Activated CD4-positive, alpha-beta T cell treated with anti-CD3 and anti-CD28 coated beads for 36 hours (primary cell): ENCODE measurements at regions of chr10 and their contacts with region 1.

Region 1: DNA sequence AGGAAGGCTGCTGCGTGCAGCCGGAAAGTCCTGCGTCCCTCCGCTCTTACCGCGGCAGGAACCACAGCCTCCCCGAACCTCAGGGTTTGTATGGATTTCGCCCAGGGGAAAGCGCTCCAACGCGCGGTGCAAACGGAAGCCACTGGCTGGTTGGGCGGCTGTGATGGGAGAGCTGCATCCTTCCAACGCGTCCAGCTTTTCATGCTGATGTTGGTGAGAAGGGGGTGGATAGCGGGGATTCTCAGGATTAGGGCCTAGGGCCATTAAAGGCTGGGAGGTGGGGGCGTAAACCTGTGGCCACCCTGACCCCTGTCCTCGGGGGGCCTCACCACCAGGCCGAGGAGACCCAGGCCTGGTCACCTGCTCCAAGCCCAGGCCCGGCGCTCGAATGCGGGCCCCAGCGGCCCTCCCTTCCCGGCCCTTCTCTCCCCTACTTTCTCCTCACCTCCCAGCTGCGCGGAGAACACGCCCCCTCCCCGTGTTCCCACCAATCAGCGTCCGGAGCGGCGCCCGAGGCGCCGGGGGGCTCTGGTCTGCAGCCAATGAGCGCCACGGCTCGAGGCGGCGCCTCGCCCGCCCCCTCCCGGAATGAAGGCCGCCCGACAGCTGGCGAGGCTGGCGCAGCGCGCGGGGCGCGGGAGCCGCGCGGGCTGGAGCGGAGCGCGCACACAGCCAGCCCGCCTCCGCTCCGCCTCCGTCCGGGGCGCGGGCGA is 458 bp upstream of the NANOS1 start:
- DNase-seq: peak; percentile 85
- ATAC-seq: peak; percentile 74
- H3K4me3 Mint-ChIP-seq: peak overlapping the region; percentile 47
- H3K27ac Mint-ChIP-seq: no peak overlapping the region
- H3K4me1 Mint-ChIP-seq: peaks cover 16% of the 10 kb centered on the region
- H3K27me3 Mint-ChIP-seq: no peaks in the 10 kb centered on the region

Region 2: DNA sequence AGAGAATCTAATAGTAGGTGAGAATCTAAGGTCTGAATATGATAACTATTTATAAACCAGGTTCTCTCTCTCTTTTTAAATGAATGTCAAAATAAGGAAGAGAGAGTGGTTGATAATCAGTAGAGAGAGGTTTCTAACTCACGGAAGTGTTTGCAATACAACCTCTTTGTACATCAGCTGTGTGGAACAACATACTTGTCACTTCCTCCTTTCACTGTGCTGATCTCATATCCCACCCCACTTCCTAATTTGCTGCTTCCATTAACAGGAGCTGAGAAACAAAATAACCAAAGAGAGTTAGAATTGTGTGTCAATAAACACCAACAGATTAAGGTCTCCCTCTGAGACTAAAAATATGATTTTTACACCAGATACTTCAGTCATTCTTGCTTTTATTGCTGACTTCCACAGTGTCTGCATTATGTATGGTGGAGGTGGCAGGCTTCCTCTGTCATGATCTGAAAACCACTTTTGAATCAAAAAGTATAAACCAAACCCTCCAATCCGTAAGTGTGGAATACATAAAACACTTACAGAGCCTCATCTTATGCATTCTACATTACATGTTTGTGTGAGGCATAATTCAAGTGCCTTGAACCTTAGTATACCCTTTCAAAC is 299.3 kb before region 1 on chr10:
- CTCF ChIA-PET with region 1: no interaction called
- POLR2A ChIA-PET with region 1: no interaction called
- intact Hi-C with region 1: loop called in 1 of 2 experiments (anchors 10 kb)
- DNase-seq: no peak
- ATAC-seq: peak; percentile 31
- H3K4me3 Mint-ChIP-seq: no peak overlapping the region
- H3K27ac Mint-ChIP-seq: no peak overlapping the region
- H3K4me1 Mint-ChIP-seq: peaks cover 57% of the 10 kb centered on the region
- H3K27me3 Mint-ChIP-seq: peaks cover 2% of the 10 kb centered on the region

Region 3: GRCh38 chr10:119070395-119071165 is 41.5 kb after region 1 on chr10:
- CTCF ChIA-PET with region 1: no interaction called
- POLR2A ChIA-PET with region 1: no interaction called
- intact Hi-C with region 1: loop called in 1 of 2 experiments (anchors 5 kb)
- DNase-seq: no peak
- ATAC-seq: no peak
- H3K4me3 Mint-ChIP-seq: no peak overlapping the region
- H3K27ac Mint-ChIP-seq: no peak overlapping the region
- H3K4me1 Mint-ChIP-seq: peaks cover 27% of the 10 kb centered on the region
- H3K27me3 Mint-ChIP-seq: no peaks in the 10 kb centered on the region